ENCODE measurements at regions of chr1 and their contacts with region 1.

Region 1: GRCh38 chr1:198699167-198700015 is 60.6 kb downstream of the PTPRC start:
- DNase-seq: peak; percentile 86
- H3K4me3 Mint-ChIP-seq: peak overlapping the region; percentile 19
- H3K27ac Mint-ChIP-seq: peak overlapping the region; percentile 83
- H3K4me1 Mint-ChIP-seq: peaks cover 81% of the 10 kb centered on the region
- H3K27me3 Mint-ChIP-seq: no peaks in the 10 kb centered on the region

Region 2: GRCh38 chr1:198713081-198713480 is 13.7 kb after region 1 on chr1:
- CTCF ChIA-PET with region 1: interaction called, 6 read pairs
- intact Hi-C with region 1: loop called (anchors 1 kb)
- DNase-seq: no peak
- H3K4me3 Mint-ChIP-seq: no peak overlapping the region
- H3K27ac Mint-ChIP-seq: peak overlapping the region; percentile 56
- H3K4me1 Mint-ChIP-seq: peaks cover 58% of the 10 kb centered on the region
- H3K27me3 Mint-ChIP-seq: no peaks in the 10 kb centered on the region

Region 3: GRCh38 chr1:199163670-199164069 is 464.3 kb after region 1 on chr1:
- CTCF ChIA-PET with region 1: no interaction called
- intact Hi-C with region 1: no loop called
- DNase-seq: no peak
- H3K4me3 Mint-ChIP-seq: no peak overlapping the region
- H3K27ac Mint-ChIP-seq: no peak overlapping the region
- H3K4me1 Mint-ChIP-seq: peaks cover 24% of the 10 kb centered on the region
- H3K27me3 Mint-ChIP-seq: no peaks in the 10 kb centered on the region

Region 4: DNA sequence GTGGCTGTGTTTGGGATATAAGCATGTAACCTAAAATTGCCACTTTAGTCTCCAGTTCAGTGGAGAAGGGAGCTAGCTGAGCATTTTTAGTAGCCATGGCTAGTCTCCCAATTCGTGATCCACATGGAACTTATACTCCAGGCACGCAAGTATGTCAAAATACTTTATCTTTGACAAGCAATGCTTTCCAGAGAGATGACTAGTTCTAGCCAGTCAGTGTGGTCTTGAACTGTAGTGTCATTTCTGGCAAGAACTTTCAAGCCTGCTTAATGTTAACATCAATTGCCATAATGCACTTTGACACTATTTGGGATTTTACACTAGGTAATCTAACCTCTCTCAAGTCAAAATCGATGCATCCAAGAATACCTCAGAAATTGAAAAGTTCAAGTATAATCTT is 599.4 kb after region 1 on chr1:
- CTCF ChIA-PET with region 1: no interaction called
- intact Hi-C with region 1: no loop called
- DNase-seq: no peak
- H3K4me3 Mint-ChIP-seq: no peak overlapping the region
- H3K27ac Mint-ChIP-seq: no peak overlapping the region
- H3K4me1 Mint-ChIP-seq: peaks cover 12% of the 10 kb centered on the region
- H3K27me3 Mint-ChIP-seq: peaks cover 4% of the 10 kb centered on the region

Measured in activated naive CD4-positive, alpha-beta T cell treated with anti-CD3 and anti-CD28 coated beads for 36 hours (primary cell).